ENCODE measurements at regions of chr7 and their contacts with region 1.

Region 1: DNA sequence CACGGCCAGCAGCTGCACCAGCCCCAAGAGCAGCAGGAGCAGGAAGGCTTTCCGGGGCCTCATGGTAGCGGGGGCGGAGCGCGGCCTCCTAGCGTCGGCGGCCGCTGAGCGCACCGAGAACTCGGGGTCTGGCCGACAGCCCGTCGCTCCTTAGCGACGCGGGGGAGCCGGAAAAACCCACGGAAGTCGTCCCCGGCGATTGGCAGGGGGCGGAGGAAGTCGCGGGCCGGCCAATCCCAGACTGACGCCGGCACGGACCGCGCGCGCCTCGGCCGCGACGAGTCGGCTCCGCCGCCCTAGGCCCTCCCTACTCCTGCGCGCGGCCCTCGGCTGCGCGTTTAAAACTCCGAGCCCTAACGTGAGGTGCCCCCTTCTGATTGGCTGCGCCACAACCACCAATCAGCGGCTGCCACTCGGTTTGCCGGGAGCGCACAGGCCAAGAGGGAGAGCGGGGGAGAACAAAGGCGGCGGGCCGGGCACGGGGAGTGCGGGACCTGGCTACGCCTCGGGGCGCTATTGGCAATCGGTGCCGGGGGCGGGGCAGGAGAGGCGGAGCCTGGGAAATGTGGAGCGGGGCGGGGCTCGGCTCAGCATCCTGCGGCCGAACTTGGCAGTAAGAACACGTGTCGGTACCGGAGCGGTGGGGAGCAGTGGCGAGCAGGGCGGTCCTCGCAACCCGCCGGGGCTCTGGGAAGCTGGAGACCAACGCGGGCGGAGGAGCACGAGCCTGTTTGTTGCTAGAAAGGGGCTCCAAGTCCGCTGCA is at the start of gene PDIA4:
- DNase-seq: peak; percentile 96 to 100 (median 99)
- ATAC-seq: peak; percentile 88
- H3K4me3 ChIP-seq: peak within 1 kb of the TSS; percentile 87
- H3K4me3 Mint-ChIP-seq: peak within 1 kb of the TSS; percentile 90
- H3K27ac ChIP-seq: peak within 1 kb of the TSS; percentile 70 to 71
- H3K27ac Mint-ChIP-seq: peak within 1 kb of the TSS; percentile 91
- H3K4me1 ChIP-seq: peaks cover 40% of the 10 kb centered on the region
- H3K4me1 Mint-ChIP-seq: peaks cover 54% of the 10 kb centered on the region
- H3K27me3 ChIP-seq: no peaks in the 10 kb centered on the region
- H3K27me3 Mint-ChIP-seq: no peaks in the 10 kb centered on the region
- CTCF ChIP-seq: no peak
- total RNA-seq, gene PDIA4: 19.5 to 19.9 TPM

Region 2: GRCh38 chr7:148935451-148935850 is 93.1 kb before region 1 on chr7:
- CTCF ChIA-PET with region 1: no interaction called
- POLR2A ChIA-PET with region 1: no interaction called
- intact Hi-C with region 1: no loop called
- DNase-seq: no peak
- ATAC-seq: no peak
- H3K4me3 ChIP-seq: no peak overlapping the region
- H3K4me3 Mint-ChIP-seq: no peak overlapping the region
- H3K27ac ChIP-seq: no peak overlapping the region
- H3K27ac Mint-ChIP-seq: no peak overlapping the region
- H3K4me1 ChIP-seq: no peaks in the 10 kb centered on the region
- H3K4me1 Mint-ChIP-seq: peaks cover 17% of the 10 kb centered on the region
- H3K27me3 ChIP-seq: no peaks in the 10 kb centered on the region
- H3K27me3 Mint-ChIP-seq: no peaks in the 10 kb centered on the region
- CTCF ChIP-seq: no peak

Region 3: DNA sequence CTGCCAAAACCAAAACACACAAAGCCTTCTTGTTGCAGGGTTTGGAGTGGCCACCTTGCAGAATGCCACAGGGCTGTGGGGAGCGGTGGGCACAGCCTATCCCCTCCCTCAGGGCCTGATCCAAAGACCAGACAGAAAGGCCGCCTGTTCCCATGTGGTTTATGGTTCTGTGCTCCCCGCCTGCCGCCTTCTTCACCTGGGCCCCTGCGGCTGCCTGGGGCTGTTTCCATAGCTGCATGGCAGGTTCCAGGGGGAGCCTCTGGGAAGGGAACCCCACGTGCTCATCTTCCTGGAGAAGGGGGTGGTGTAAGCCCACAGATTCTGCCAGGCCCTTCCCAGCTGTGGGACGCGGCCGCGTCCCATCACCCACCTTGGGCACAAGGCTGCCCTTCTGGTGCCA is 73.8 kb before region 1 on chr7:
- CTCF ChIA-PET with region 1: no interaction called
- POLR2A ChIA-PET with region 1: no interaction called
- intact Hi-C with region 1: no loop called
- DNase-seq: no peak
- ATAC-seq: no peak
- H3K4me3 ChIP-seq: no peak overlapping the region
- H3K4me3 Mint-ChIP-seq: no peak overlapping the region
- H3K27ac ChIP-seq: no peak overlapping the region
- H3K27ac Mint-ChIP-seq: no peak overlapping the region
- H3K4me1 ChIP-seq: no peaks in the 10 kb centered on the region
- H3K4me1 Mint-ChIP-seq: no peaks in the 10 kb centered on the region
- H3K27me3 ChIP-seq: no peaks in the 10 kb centered on the region
- H3K27me3 Mint-ChIP-seq: no peaks in the 10 kb centered on the region
- CTCF ChIP-seq: no peak

Region 4: GRCh38 chr7:148987010-148987750 is 41.3 kb before region 1 on chr7:
- CTCF ChIA-PET with region 1: interaction called, 3 read pairs
- POLR2A ChIA-PET with region 1: interaction called, 14 read pairs
- intact Hi-C with region 1: loop called in 1 of 2 experiments (anchors 1 kb)
- DNase-seq: peak; percentile 58 to 94 (median 70)
- ATAC-seq: peak; percentile 71
- H3K4me3 ChIP-seq: peak overlapping the region; percentile 95
- H3K4me3 Mint-ChIP-seq: peak overlapping the region; percentile 96
- H3K27ac ChIP-seq: peak overlapping the region; percentile 73 to 94
- H3K27ac Mint-ChIP-seq: peak overlapping the region; percentile 95
- H3K4me1 ChIP-seq: peaks cover 41% of the 10 kb centered on the region
- H3K4me1 Mint-ChIP-seq: peaks cover 55% of the 10 kb centered on the region
- H3K27me3 ChIP-seq: no peaks in the 10 kb centered on the region
- H3K27me3 Mint-ChIP-seq: peaks cover 5% of the 10 kb centered on the region
- CTCF ChIP-seq: no peak

Region 5: GRCh38 chr7:149005241-149006050 is 23.1 kb before region 1 on chr7:
- CTCF ChIA-PET with region 1: interaction called, 10 read pairs
- POLR2A ChIA-PET with region 1: interaction called, 12 read pairs
- intact Hi-C with region 1: loop called (anchors 1 to 2 kb)
- DNase-seq: peak; percentile 75 to 92 (median 80)
- ATAC-seq: peak; percentile 90
- H3K4me3 ChIP-seq: no peak overlapping the region
- H3K4me3 Mint-ChIP-seq: no peak overlapping the region
- H3K27ac ChIP-seq: no peak overlapping the region
- H3K27ac Mint-ChIP-seq: peak overlapping the region; percentile 46
- H3K4me1 ChIP-seq: peaks cover 12% of the 10 kb centered on the region
- H3K4me1 Mint-ChIP-seq: peaks cover 6% of the 10 kb centered on the region
- H3K27me3 ChIP-seq: no peaks in the 10 kb centered on the region
- H3K27me3 Mint-ChIP-seq: no peaks in the 10 kb centered on the region
- CTCF ChIP-seq: peak; percentile 95

Region 6: GRCh38 chr7:149071641-149072437 is 43.3 kb after region 1 on chr7:
- CTCF ChIA-PET with region 1: interaction called, 22 read pairs
- POLR2A ChIA-PET with region 1: interaction called, 3 read pairs
- intact Hi-C with region 1: loop called in 1 of 2 experiments (anchors 5 kb)
- DNase-seq: peak; percentile 23 to 81 (median 44)
- ATAC-seq: peak; percentile 76
- H3K4me3 ChIP-seq: no peak overlapping the region
- H3K4me3 Mint-ChIP-seq: no peak overlapping the region
- H3K27ac ChIP-seq: peak overlapping the region in 1 of 2 donors; percentile 34
- H3K27ac Mint-ChIP-seq: peak overlapping the region; percentile 43
- H3K4me1 ChIP-seq: peaks cover 11% of the 10 kb centered on the region
- H3K4me1 Mint-ChIP-seq: peaks cover 15% of the 10 kb centered on the region
- H3K27me3 ChIP-seq: no peaks in the 10 kb centered on the region
- H3K27me3 Mint-ChIP-seq: no peaks in the 10 kb centered on the region
- CTCF ChIP-seq: no peak

Region 7: DNA sequence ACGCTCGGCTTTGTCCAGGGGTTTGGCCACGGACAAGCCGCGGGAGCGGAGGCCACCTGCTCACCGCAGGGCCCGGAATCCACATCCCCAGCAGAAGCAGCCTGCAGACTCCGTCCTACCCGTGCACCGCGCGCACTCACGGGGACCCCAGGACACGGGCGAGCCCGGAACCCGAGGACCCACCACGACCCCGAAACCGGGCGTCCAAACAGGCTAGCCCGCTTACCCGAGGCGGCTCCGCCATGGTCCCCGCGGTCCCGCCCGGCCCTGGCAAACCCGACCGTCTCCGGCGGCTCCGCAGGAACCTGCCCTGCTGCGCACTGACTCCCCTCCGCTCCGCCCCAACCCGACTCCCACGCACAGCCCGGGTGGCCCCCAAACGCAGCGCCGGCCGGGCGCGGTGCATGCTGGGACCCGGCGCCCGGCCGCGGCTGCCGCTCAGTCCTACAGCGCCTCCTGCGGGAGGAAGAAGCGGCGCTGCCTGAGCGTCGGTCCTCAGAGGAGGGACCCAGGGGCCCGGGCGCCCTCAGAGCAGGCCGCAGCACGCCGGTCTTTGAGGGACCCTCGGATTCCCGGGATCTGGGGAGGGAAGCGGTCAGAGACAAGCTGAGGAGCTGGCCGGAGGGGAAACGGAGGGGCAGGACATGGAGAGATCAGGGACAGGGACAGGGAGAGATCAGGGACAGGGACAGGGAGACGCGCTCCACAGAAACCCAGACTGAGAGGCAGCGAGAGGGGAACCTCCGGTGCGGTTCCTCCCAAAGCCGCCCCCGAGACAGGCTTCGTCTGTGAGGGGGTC is 62.1 kb after region 1 on chr7 and contains the start of gene ZNF786:
- CTCF ChIA-PET with region 1: interaction called, 3 read pairs
- POLR2A ChIA-PET with region 1: interaction called, 4 read pairs
- intact Hi-C with region 1: loop called (anchors 1 kb)
- DNase-seq: peak; percentile 81 to 97 (median 90)
- ATAC-seq: peak; percentile 82
- H3K4me3 ChIP-seq: peak within 1 kb of the TSS; percentile 72
- H3K4me3 Mint-ChIP-seq: peak within 1 kb of the TSS; percentile 100
- H3K27ac ChIP-seq: peak within 1 kb of the TSS; percentile 82 to 90
- H3K27ac Mint-ChIP-seq: peak within 1 kb of the TSS; percentile 93
- H3K4me1 ChIP-seq: peaks cover 27% of the 10 kb centered on the region
- H3K4me1 Mint-ChIP-seq: peaks cover 26% of the 10 kb centered on the region
- H3K27me3 ChIP-seq: no peaks in the 10 kb centered on the region
- H3K27me3 Mint-ChIP-seq: no peaks in the 10 kb centered on the region
- CTCF ChIP-seq: peak; percentile 87
- total RNA-seq, gene ZNF786: 2.7 to 3.5 TPM

Region 8: DNA sequence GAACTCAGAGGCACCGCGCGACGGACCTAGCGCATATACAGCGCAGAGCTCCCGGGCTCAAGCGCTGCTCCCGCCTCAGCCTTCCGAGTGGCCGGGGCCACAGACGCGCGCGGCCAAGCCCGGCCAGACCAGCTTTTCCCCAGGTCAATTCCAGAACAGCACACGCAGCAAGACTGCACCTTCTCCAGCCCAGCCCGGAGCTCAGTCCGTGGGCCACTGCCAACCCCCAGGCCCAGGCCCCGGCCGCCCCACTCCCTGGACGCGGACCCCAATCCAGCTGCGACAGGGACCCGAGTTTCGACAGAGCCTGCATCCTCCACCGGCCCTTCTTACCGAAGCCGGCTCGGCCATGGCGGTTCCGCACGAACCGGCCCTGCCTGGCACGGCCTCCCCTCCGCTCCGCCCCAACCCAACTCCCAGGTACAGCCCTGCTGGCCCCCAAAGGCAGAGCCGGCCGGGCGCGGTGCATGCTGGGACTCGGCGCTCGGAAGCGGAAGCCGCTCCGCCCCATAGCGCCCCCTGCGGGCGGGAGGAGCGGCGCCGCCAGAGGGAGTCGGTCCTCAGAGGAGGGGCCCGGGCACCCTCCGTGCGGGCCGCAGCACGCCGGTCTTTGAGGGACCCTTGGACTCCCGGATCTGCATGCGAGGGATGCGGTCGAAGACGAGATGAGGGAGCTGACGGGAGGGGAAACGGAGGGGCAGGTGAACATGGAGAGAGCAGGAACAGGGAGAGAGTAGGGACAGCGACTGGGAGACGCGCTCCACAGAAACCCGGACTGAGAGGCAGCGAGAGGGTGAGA is 97.5 kb after region 1 on chr7 and contains the start of gene ZNF425:
- CTCF ChIA-PET with region 1: interaction called, 4 read pairs
- POLR2A ChIA-PET with region 1: interaction called, 8 read pairs
- intact Hi-C with region 1: loop called in 1 of 2 experiments (anchors 2 kb)
- DNase-seq: peak; percentile 87 to 96 (median 93)
- ATAC-seq: peak; percentile 83
- H3K4me3 ChIP-seq: peak within 1 kb of the TSS; percentile 100
- H3K4me3 Mint-ChIP-seq: peak within 1 kb of the TSS; percentile 100
- H3K27ac ChIP-seq: peak within 1 kb of the TSS; percentile 79 to 80
- H3K27ac Mint-ChIP-seq: peak within 1 kb of the TSS; percentile 96
- H3K4me1 ChIP-seq: peaks cover 12% of the 10 kb centered on the region
- H3K4me1 Mint-ChIP-seq: peaks cover 24% of the 10 kb centered on the region
- H3K27me3 ChIP-seq: no peaks in the 10 kb centered on the region
- H3K27me3 Mint-ChIP-seq: no peaks in the 10 kb centered on the region
- CTCF ChIP-seq: peak; percentile 94
- total RNA-seq, gene ZNF425: 0.22 to 0.39 TPM